WTC11 (cell line): ENCODE measurements at regions of chr1 and their contacts with region 1.

Region 1: GRCh38 chr1:16366722-16367257 is at the start of gene SZRD1:
- DNase-seq: peak; percentile 92
- ATAC-seq: peak; percentile 91
- H3K4me3 Mint-ChIP-seq: peak within 1 kb of the TSS; percentile 94
- H3K27ac Mint-ChIP-seq: peak within 1 kb of the TSS; percentile 97
- H3K4me1 Mint-ChIP-seq: peaks cover 17% of the 10 kb centered on the region
- H3K27me3 Mint-ChIP-seq: peaks cover 4% of the 10 kb centered on the region
- CTCF ChIP-seq: no peak
- total RNA-seq, gene SZRD1: 94.9 to 113 TPM (median 104 TPM) in 3 replicates

Region 2: DNA sequence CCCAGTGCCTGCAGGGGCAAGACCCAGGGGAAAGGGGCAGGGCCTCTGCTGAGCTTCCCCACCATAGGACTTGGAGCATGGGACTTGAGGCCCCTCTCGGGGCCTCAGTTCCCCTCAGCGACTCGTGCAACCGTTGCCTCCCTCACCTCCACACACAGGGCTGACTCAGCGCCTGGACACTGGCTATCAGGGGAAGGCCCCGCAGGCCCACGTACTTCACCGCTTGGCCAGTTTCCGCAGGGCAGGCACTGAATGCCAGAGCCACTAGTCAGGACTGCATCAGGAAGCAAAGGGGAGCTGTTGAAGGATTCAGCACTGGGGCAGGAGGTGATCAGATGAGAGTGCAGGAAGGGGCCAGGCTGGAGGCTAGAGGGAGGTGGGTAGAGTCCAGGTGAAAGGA is 277.8 kb before region 1 on chr1:
- CTCF ChIA-PET with region 1: no interaction called
- POLR2A ChIA-PET with region 1: no interaction called
- DNase-seq: no peak
- ATAC-seq: no peak
- H3K4me3 Mint-ChIP-seq: no peak overlapping the region
- H3K27ac Mint-ChIP-seq: 0 out of 2 replicates have a peak overlapping the region, but pooled peaks have one; percentile 68
- H3K4me1 Mint-ChIP-seq: peaks cover 11% of the 10 kb centered on the region; the same call in 1 of the 2 replicates
- H3K27me3 Mint-ChIP-seq: no peaks in the 10 kb centered on the region
- CTCF ChIP-seq: no peak

Region 3: GRCh38 chr1:16289963-16290362 is 76.8 kb before region 1 on chr1:
- CTCF ChIA-PET with region 1: interaction called, 13 read pairs
- POLR2A ChIA-PET with region 1: no interaction called
- DNase-seq: no peak
- ATAC-seq: no peak
- H3K4me3 Mint-ChIP-seq: no peak overlapping the region
- H3K27ac Mint-ChIP-seq: no peak overlapping the region
- H3K4me1 Mint-ChIP-seq: peaks cover 7% of the 10 kb centered on the region
- H3K27me3 Mint-ChIP-seq: no peaks in the 10 kb centered on the region
- CTCF ChIP-seq: no peak

Region 4: GRCh38 chr1:16324456-16324890 is 42.3 kb before region 1 on chr1:
- CTCF ChIA-PET with region 1: interaction called, 4 read pairs
- POLR2A ChIA-PET with region 1: interaction called, 10 read pairs
- DNase-seq: no peak
- ATAC-seq: no peak
- H3K4me3 Mint-ChIP-seq: no peak overlapping the region
- H3K27ac Mint-ChIP-seq: no peak overlapping the region
- H3K4me1 Mint-ChIP-seq: no peaks in the 10 kb centered on the region
- H3K27me3 Mint-ChIP-seq: no peaks in the 10 kb centered on the region
- CTCF ChIP-seq: no peak

Region 5: DNA sequence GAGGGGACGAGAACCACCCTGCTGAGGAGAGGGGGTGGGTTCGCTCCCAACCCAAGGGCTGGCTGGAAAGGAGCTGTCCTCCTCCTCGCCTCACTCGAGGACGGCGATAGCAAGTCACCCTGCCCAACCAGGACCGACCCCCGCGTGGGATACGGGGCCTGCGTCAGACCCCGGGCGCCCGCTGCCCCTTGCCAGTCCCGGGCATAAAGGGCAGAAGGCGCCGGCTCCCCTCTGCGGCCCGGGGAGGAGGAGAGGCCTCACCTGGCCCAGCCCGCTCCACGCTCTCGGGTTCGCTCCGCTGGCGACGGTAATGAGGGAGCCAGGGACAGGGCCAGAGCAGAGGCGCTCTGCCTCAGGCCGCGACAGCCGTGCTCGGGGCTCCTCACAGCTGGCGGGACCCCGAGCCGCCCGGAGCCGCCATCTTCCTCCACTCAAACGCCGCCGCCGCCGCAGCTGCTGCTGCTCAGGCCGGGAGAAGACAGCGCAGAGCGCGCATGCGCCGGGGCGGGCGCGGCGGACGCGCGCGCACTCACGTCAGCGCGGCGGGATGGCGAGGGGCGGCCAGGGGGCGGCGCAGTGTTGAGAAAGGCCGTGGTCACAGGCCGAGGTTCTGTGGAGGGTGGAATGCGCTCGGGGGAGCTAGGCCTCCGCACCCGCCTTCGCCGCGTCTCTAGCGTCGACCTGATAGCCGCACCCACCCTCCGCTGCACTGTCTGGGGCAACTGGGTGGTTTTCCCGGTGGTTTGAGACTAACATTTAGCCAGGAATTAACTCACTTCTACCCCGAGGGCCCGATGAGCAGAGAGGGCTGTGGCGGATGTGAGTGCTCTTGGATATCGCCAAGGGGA is 14.6 kb before region 1 on chr1 and contains the start of gene FBXO42:
- CTCF ChIA-PET with region 1: interaction called, 61 read pairs
- POLR2A ChIA-PET with region 1: interaction called, 4 read pairs
- DNase-seq: peak; percentile 93
- ATAC-seq: peak; percentile 94
- H3K4me3 Mint-ChIP-seq: peak within 1 kb of the TSS; percentile 95
- H3K27ac Mint-ChIP-seq: peak within 1 kb of the TSS; percentile 95
- H3K4me1 Mint-ChIP-seq: peaks cover 21% of the 10 kb centered on the region
- H3K27me3 Mint-ChIP-seq: no peaks in the 10 kb centered on the region
- CTCF ChIP-seq: no peak
- total RNA-seq, gene FBXO42: 16.6 to 18.0 TPM (median 17.5 TPM) in 3 replicates

Region 6: DNA sequence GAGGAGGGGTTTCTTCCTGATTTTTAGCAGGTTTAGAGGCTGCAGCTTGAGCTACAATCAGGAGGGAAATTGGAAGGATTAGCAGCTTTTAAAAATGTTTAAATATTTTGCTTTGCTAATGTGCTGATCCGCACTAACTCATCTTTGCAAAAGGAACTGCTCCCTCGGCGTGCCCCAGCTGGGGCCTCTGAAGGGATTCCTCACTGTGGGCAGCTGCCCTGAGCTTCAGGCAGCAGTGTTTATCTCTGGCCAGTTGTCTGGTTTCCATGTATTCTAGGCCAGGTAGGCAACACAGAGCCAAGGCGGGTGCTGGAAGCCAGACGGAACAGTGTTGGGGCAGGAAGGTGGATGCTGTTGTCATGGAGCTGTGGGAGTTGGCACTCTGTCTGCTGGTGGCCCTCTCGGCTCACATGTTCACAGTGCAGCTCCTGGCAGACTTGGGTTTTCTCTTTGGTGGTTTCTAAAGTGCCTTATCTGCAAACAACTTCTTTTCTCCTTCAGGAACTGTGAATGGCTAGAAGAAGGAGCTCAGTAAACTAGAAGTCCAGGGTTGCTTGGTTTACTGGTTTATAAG is 92.6 kb after region 1 on chr1:
- CTCF ChIA-PET with region 1: no interaction called
- POLR2A ChIA-PET with region 1: no interaction called
- DNase-seq: no peak
- ATAC-seq: no peak
- H3K4me3 Mint-ChIP-seq: no peak overlapping the region
- H3K27ac Mint-ChIP-seq: no peak overlapping the region
- H3K4me1 Mint-ChIP-seq: no peaks in the 10 kb centered on the region
- H3K27me3 Mint-ChIP-seq: no peaks in the 10 kb centered on the region
- CTCF ChIP-seq: no peak